ENCODE measurements at regions of chr10 and their contacts with region 1.

Region 1: DNA sequence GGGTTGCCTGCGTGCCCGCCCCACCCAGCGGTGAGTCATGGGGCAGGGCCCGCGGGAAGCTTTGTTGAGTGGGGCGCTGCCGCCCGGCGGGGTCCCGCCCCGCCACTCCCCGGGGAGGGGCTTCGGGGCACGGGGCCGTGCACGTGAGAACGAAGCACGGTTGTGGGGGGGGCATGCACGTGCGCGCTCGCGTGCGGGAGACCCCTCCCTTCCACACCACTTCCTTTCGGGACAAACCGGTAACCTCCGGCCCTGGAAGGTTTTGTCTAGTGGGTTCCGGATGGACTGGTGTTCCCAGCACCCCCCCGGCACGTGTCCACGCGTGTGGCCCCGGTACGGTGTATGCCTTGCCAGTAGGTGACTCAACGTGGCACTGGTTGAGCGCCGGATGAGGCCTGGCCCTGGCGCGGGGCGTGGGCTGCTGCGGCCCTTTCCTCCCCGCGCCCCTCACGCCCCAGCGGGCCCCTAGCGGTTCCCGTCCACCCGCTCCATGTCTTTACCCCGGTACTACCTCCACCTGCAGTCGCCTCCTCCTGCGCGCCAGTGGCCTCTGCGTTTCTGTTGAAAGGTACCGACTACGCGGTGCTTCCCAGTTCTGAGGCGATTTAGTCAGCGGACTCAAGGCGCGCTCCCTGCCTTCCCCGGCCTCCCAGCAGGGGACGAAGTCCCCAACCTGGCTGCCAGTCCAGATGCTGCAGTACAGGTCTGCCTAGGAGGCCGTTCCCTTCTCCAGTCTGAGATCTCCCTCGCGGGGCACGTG is 3.1 kb downstream of the ADIRF start:
- DNase-seq: peak in 1 of 2 experiments; percentile 77
- H3K4me3 ChIP-seq: peak overlapping the region; percentile 34 to 68 (median 46)
- H3K27ac ChIP-seq: no peak overlapping the region
- H3K4me1 ChIP-seq: peaks cover 4 to 34% (median 27%) of the 10 kb centered on the region in 4 experiments
- H3K27me3 ChIP-seq: peaks cover 1 to 20% (median 16%) of the 10 kb centered on the region in 4 experiments
- CTCF ChIP-seq: no peak
- EP300 ChIP-seq: no peak
- POLR2A ChIP-seq: peak in 1 of 2 experiments; percentile 21; a peak in 1 of 3 replicates
- RAD21 ChIP-seq: no peak; a peak in 1 of 4 replicates

Region 2: DNA sequence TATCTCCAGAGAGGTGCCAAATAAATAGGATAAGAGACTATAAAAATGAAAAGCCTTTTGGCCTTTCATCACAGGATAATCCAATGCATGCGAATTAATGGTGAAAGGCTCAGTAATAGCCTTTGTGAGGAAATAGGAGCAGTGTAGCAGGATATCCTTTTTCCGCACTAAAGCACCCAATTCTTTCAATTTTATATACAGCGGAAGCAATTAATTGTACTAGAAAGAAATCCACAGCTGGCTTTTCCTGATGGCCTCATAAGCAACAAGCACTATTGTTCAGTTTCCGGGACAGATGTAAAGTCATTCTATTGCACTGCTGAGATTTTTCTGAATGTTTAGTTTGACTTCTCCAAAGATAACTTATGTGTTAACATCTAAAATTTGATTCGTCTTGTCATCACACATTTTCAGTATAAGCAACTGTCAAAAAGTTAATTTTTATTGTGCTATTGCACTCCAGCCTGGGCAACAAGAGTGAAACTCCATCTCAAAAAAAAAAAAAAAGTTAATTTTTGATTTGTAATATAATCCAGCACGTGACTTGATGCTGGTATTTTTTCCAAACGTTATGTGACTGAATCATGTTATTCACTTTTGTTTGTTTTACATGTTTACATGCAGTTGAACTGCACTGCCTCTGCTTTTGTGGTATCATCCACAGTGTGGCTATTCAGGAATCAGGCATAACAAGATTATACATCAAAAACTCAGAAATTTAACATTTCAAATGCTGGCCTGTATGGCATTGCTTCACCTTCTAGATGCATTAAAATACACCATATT is 223.4 kb before region 1 on chr10:
- CTCF ChIA-PET with region 1: no interaction called
- POLR2A ChIA-PET with region 1: no interaction called
- DNase-seq: no peak
- H3K4me3 ChIP-seq: no peak overlapping the region
- H3K27ac ChIP-seq: no peak overlapping the region
- H3K4me1 ChIP-seq: peaks cover 0 to 6% (median 4%) of the 10 kb centered on the region in 4 experiments; a peak in 6 of 7 replicates
- H3K27me3 ChIP-seq: no peaks in the 10 kb centered on the region
- CTCF ChIP-seq: no peak
- EP300 ChIP-seq: no peak
- POLR2A ChIP-seq: no peak
- RAD21 ChIP-seq: no peak

Region 3: GRCh38 chr10:86953747-86954680 is 17.4 kb before region 1 on chr10:
- CTCF ChIA-PET with region 1: interaction called, 975 read pairs
- POLR2A ChIA-PET with region 1: interaction called, 14 read pairs
- DNase-seq: peak; percentile 80 to 88
- H3K4me3 ChIP-seq: peak overlapping the region in 3 of 4 experiments; percentile 13 to 44 (median 26); a peak in 4 of 8 replicates
- H3K27ac ChIP-seq: peak overlapping the region; percentile 80
- H3K4me1 ChIP-seq: peaks cover 14 to 45% (median 36%) of the 10 kb centered on the region in 4 experiments
- H3K27me3 ChIP-seq: no peaks in the 10 kb centered on the region
- CTCF ChIP-seq: no peak
- EP300 ChIP-seq: peak; percentile 62 to 89
- POLR2A ChIP-seq: no peak; a peak in 1 of 3 replicates
- RAD21 ChIP-seq: peak; percentile 33 to 34; a peak in 3 of 4 replicates

Region 4: DNA sequence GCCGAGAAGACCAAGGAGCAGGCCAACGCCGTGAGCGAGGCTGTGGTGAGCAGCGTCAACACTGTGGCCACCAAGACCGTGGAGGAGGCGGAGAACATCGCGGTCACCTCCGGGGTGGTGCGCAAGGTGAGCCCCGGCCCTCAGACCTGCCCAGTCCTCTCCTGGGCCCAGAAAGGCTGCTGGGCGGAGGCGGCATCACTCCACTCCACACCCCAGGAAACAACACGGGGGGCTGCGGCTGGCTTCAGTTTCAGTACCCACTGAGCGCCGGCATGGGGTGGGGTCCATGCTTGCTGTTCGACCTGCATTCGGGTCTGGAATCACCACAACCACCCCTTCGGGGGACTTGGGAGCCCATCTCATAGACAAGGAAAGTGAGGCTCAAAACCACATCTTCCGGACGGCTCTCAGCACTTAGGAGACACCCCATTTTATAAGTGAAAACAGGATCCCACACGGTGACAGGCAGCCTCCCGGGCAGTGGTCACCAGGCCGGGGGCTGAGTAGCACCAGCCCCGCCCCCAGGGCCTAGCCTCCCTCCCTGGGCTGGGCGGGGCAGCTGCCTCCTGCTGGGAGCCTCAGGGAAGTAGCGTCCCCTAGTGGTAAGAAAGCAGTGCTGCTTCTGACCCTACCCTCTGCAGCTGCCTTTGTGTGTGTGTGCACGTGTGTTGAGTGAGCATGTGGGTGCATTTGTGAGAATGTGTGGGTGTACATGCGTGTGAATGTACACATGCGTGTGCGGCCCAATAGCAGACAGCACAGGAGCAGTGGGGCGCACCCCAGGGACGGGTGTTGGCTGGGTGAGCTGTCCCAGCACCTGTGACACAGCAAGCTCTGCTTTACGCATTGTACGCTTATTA is 11.2 kb before region 1 on chr10:
- CTCF ChIA-PET with region 1: interaction called, 975 read pairs
- POLR2A ChIA-PET with region 1: interaction called, 14 read pairs
- DNase-seq: peak in 1 of 2 experiments; percentile 81
- H3K4me3 ChIP-seq: no peak overlapping the region
- H3K27ac ChIP-seq: no peak overlapping the region; the same call in 1 of the 2 replicates
- H3K4me1 ChIP-seq: peaks cover 15 to 47% (median 34%) of the 10 kb centered on the region in 4 experiments
- H3K27me3 ChIP-seq: no peaks in the 10 kb centered on the region
- CTCF ChIP-seq: peak in 2 of 3 experiments; percentile 96 to 100; a peak in 3 of 4 replicates
- EP300 ChIP-seq: no peak
- POLR2A ChIP-seq: no peak
- RAD21 ChIP-seq: peak; percentile 86 to 90

Region 5: DNA sequence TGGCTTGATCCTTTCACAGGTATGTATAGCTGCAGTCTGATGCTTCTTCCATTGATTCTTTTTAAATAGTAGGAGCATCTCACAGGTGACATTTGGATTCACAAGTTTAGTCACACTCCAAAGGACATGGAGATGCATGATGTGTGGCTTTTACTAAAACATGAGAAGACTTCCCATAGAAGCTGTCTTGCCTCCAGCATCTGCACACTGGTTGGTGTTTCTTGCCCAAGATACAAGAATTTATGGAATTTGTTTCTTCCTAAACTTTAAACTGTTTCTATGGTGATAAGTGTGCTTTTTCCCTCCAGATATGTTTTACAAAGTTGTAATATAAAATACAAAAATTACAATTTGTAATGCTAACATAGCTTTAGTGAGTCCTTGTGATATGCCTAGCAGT is 21.0 kb after region 1 on chr10:
- CTCF ChIA-PET with region 1: interaction called, 14 read pairs
- POLR2A ChIA-PET with region 1: no interaction called
- DNase-seq: no peak
- H3K4me3 ChIP-seq: no peak overlapping the region
- H3K27ac ChIP-seq: no peak overlapping the region
- H3K4me1 ChIP-seq: no peaks in the 10 kb centered on the region
- H3K27me3 ChIP-seq: no peaks in the 10 kb centered on the region
- CTCF ChIP-seq: no peak
- EP300 ChIP-seq: no peak
- POLR2A ChIP-seq: no peak
- RAD21 ChIP-seq: no peak

Measured in H1 (cell line).